Right ventricle myocardium superior (tissue), 1 donor: ENCODE measurements at regions of chr16 and their contacts with region 1.

Region 1: DNA sequence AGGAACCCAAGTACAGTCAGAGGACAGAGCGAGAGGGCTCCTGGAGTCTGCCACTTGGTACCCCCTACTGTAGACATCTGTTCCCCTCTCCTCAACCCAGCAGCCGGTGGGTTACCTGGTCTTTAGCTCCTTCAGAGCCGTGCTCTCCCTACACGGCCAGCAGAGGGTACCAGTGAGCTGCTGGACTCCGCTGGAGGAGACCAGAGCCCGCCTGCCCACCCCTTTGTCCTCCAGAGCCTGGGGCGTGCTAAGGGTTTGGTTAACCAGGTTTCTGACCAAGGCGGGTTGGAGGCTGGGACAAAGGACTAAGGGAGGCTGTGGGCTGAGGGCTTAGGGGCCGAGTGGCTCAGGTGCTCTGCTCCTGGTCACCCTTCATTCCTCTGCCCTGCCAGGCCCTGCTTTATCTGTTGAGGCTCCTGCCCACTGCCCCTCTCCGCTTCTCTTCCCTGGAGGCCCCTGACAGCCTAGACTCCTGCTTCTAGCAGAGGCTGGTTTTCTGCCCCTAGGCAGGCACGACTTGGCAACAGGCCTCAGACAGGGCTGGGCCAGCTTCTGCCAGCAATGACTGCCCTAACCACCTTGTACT is 2.7 kb upstream of the HSD11B2 start:
- DNase-seq: peak; percentile 84
- ATAC-seq: peak; percentile 84

Region 2: GRCh38 chr16:67464565-67464964 is 36.3 kb after region 1 on chr16:
- intact Hi-C with region 1: loop called (anchors 2 kb)
- DNase-seq: no peak
- ATAC-seq: no peak

Region 3: DNA sequence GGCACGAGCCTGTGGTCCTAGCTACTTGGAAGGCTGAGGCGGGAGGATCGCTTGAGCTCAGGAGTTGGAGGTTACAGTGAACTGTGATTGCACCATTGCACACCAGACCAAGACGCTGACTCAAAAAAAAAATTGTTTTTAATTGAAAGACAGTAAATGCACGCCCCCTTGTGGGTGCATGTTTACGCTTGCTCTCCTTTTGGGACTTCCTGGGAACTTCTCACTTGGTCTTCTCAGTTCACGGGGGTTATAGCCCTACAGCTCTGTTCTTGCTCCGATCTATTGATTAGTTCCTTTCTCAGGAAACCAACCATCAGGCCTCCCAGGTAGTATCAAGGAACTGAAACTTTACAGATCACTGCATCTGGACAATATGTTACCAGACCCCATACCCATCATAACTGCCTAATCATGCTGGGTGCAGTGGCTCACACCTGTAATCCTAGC is 86.2 kb after region 1 on chr16:
- intact Hi-C with region 1: loop called (anchors 2 kb)
- DNase-seq: peak; percentile 89
- ATAC-seq: peak; percentile 87

Region 4: DNA sequence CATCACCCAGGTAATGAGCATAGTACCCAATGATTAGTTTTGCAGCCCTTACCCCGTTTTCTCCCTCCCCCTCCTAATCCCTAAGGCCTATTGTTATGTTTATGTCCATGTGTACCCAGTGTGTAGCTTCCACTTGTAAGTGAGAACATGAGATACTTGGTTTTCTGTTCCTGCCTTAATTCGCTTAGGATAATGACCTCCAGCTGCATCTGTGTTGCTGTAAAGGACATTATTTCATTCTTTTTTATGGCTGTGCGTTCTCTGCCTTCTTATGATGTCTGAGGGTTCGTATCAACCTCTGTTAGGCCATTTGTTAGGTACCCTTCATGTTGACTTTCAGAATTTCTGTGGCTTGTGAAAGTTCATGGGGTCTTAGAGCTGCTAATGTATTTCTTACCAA is 165.0 kb after region 1 on chr16:
- intact Hi-C with region 1: no loop called
- DNase-seq: no peak
- ATAC-seq: no peak